Heart left ventricle (tissue), 16 donors: ENCODE measurements at regions of chr2 and their contacts with region 1.

Region 1: DNA sequence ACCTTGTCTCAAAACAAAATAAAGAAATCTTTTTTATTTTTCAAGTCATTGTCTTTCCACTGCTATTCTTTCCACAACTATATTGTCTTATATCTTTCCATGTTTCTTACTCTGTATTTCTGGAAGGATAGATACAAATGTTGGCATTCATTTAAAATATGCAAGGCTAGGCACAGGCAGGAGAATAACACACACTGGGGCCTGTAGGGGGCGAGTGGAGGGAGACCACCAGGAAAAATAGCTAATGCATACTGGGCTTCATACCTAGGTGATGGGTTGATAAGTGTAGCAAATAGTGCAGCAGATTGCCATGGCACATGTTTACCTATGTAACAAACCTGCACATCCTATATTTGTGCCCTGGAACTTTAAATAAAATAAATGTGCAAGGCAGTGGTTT is 9.6 kb downstream of the MRPL30 start:
- DNase-seq: no peak
- ATAC-seq: no peak
- H3K4me3 ChIP-seq: no peak overlapping the region
- H3K27ac ChIP-seq: no peak overlapping the region
- H3K4me1 ChIP-seq: no peaks in the 10 kb centered on the region
- H3K27me3 ChIP-seq: no peaks in the 10 kb centered on the region
- CTCF ChIP-seq: no peak
- POLR2A ChIP-seq: no peak

Region 2: GRCh38 chr2:99325363-99325762 is 134.8 kb after region 1 on chr2:
- intact Hi-C with region 1: loop called in 2 of 10 experiments (anchors 10 kb)
- DNase-seq: no peak
- ATAC-seq: no peak
- H3K4me3 ChIP-seq: no peak overlapping the region
- H3K27ac ChIP-seq: no peak overlapping the region
- H3K4me1 ChIP-seq: no peaks in the 10 kb centered on the region
- H3K27me3 ChIP-seq: no peaks in the 10 kb centered on the region
- CTCF ChIP-seq: no peak
- POLR2A ChIP-seq: no peak